ENCODE measurements at regions of chr1 and their contacts with region 1.

Region 1: GRCh38 chr1:212994926-212995325 is 20.7 kb downstream of the ANGEL2 start:
- DNase-seq: no peak
- CTCF ChIP-seq: no peak

Region 2: DNA sequence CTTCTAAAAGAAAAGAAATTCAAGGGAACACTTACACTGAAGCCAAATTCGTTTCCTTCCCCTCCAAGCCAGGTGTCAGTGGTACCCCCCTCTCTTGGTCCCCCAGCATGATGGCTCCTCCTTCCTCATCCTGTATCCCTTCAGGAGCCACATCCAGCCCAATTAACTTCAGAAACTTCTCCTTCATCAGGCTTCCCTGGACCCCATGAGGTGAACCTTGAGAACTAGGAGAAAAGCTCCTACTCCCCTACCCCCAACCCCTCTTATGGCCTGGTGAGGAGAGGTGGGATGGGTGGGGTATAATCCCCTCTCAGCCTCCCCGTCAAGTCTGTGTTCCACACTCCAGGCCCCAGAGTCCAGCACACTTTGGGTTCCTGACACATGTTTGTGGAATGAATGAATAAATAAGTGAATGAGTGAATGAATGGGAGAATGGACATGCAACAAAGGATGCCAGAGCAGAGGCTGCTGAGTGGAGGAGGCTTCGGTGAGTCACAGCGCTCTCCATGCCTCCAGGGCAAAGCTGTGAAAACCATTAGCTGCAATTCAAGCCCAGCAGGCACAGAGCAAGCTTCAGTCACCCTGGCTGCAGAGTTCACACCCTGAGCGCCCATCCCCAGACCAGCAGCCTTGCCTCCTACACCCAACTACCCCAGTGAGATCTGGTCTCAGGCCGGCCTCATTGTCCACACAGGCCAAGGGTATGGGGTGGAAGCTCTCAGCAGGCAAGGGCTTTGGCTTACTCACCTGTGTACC is 339.1 kb before region 1 on chr1:
- CTCF ChIA-PET with region 1: no interaction called
- POLR2A ChIA-PET with region 1: no interaction called
- DNase-seq: no peak
- CTCF ChIP-seq: no peak

Region 3: GRCh38 chr1:212749821-212750535 is 244.9 kb before region 1 on chr1:
- CTCF ChIA-PET with region 1: interaction called, 14 read pairs
- POLR2A ChIA-PET with region 1: no interaction called
- DNase-seq: peak; percentile 35
- CTCF ChIP-seq: peak; percentile 46

Region 4: DNA sequence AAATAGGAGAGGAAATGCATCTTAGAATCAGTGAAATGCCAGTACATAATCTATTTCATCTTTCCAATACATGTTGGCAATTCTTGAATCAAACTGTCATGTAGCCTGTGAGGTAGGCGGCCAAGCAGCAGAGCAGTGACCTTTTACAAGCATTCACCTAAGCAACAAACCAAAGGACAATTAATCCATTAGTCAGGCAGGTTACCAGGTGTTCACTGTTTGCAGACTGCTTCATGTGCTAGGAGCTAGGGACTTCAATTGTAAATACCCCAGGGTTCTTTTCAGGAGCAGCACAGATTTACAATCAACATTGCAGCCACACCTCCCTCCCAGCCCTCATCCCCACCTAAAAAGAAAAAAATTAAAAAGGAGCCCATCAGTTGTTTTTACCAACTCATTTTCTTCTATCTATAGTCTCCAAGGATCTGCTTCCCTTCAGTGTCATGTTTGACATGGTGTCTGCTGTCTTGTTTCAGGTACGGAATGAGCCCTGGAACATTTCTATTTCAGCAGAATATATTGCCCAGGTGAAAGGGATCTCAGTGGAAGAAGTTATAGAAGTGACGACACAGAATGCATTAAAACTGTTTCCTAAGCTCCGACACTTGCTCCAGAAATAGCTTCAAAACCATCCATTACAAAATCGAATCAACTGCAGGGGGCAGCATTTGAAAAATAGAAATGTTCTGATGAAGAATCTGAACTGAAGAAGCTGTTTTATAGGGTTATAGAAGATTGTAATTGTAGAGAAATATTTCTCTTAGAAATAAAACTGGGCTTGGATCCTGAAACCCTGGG is 180.2 kb before region 1 on chr1:
- CTCF ChIA-PET with region 1: interaction called, 21 read pairs
- POLR2A ChIA-PET with region 1: interaction called, 4 read pairs
- DNase-seq: no peak
- CTCF ChIP-seq: no peak

Region 5: DNA sequence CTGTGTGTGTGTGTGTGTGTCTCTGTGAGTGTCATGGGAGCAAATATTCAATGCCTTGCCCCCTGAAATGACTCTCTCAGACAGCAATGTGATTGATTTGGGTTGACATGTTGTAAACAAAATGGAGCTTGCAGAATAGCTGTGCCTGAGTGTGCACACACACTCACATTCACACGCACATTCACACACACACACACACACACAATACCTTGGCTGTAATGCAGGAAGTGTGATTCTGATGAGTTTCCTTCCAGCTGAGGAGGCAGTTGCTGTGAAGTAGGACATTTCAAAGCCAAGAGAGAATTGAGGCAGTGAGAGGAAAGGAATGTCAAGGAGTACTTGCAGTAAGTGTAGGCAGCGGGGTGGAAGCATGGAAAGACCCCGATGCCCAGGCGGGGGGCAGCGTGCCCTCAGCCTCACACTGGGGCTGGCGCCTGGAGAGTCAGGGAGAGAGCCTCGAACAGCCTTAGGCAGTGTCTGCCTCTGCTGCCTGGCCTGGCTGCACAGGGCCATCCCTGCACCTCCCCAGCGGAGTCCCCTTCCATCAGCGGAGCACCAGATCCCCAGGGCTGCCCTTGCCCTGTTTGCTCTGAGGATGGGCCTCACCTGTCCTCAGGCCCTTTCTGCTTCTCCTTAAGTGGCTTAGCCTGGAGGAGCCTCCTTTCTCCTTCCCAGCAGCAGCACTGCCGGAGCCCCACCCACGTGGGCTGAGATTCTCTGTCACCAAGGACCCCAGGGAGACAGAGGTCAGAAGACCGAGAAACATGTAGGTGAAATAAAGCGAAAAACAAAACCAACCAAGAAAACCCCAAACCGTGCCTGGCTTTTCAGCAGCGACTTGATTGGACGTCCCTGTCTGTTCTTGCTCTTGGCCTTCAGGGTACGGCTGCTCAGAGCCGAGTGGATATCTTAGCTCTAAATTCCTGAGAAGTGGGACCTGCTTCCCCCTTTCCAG is 35.4 kb before region 1 on chr1:
- CTCF ChIA-PET with region 1: interaction called, 36 read pairs
- POLR2A ChIA-PET with region 1: no interaction called
- DNase-seq: peak; percentile 85
- CTCF ChIP-seq: no peak

Region 6: GRCh38 chr1:212981571-212982328 is 13.2 kb before region 1 on chr1:
- CTCF ChIA-PET with region 1: interaction called, 45 read pairs
- POLR2A ChIA-PET with region 1: interaction called, 4 read pairs
- DNase-seq: no peak
- CTCF ChIP-seq: no peak

Region 7: GRCh38 chr1:213061263-213061662 is 66.3 kb after region 1 on chr1:
- CTCF ChIA-PET with region 1: no interaction called
- POLR2A ChIA-PET with region 1: no interaction called
- DNase-seq: no peak
- CTCF ChIP-seq: no peak

Region 8: GRCh38 chr1:213083112-213083445 is 88.2 kb after region 1 on chr1:
- CTCF ChIA-PET with region 1: no interaction called
- POLR2A ChIA-PET with region 1: no interaction called
- DNase-seq: no peak
- CTCF ChIP-seq: no peak

Measured in GM10248 (cell line).